ENCODE measurements at regions of chr6 and their contacts with region 1.

Region 1: DNA sequence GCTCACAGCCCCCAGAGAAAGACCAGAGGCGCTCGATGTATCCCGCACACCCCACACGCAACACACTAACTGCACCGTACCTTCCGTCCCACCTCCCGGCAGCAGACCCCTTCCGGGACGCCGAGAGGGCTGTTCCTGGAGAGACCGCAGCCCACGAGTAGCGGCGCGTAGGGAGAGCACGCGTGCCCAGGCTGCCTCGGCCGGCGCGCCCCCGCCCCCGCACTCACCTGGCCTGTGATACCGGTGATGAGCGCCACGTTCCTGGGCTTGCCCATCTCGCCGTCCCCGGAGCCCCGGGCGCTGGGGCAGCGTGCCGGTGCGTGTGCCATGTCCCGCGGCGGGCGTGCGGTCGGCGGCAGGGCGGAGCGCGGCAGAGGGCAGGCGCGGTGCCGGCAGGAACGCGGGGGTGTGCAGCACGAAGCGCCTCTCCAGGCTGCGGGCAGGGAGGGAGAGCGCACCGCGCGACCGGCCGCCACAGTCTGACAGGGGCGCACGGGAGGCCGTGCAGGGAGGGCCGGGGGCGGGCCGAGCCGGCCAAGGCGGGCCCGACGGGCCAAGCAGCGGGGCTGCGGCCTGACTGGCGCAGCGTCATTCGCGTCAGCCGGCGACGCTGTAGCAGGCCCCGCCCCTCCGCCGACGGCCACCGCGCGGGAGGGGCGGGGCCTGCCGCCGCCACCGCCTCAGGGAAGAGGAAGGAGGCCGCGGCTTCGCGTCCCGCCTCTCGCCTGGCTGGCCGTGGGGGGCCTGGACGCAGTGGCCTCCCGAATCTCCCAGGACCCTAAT is at the start of gene GMDS:
- DNase-seq: peak; percentile 86
- H3K4me3 Mint-ChIP-seq: peak within 1 kb of the TSS; percentile 91
- H3K27ac Mint-ChIP-seq: peak within 1 kb of the TSS; percentile 92
- H3K4me1 Mint-ChIP-seq: peaks cover 58% of the 10 kb centered on the region
- H3K27me3 Mint-ChIP-seq: no peaks in the 10 kb centered on the region
- total RNA-seq, gene GMDS: 34.7 to 36.4 TPM

Region 2: GRCh38 chr6:2127484-2127911 is 117.8 kb before region 1 on chr6:
- CTCF ChIA-PET with region 1: no interaction called
- POLR2A ChIA-PET with region 1: no interaction called
- intact Hi-C with region 1: loop called (anchors 5 kb)
- DNase-seq: peak; percentile 73
- H3K4me3 Mint-ChIP-seq: no peak overlapping the region
- H3K27ac Mint-ChIP-seq: peak overlapping the region; percentile 33
- H3K4me1 Mint-ChIP-seq: peaks cover 33% of the 10 kb centered on the region
- H3K27me3 Mint-ChIP-seq: no peaks in the 10 kb centered on the region

Region 3: DNA sequence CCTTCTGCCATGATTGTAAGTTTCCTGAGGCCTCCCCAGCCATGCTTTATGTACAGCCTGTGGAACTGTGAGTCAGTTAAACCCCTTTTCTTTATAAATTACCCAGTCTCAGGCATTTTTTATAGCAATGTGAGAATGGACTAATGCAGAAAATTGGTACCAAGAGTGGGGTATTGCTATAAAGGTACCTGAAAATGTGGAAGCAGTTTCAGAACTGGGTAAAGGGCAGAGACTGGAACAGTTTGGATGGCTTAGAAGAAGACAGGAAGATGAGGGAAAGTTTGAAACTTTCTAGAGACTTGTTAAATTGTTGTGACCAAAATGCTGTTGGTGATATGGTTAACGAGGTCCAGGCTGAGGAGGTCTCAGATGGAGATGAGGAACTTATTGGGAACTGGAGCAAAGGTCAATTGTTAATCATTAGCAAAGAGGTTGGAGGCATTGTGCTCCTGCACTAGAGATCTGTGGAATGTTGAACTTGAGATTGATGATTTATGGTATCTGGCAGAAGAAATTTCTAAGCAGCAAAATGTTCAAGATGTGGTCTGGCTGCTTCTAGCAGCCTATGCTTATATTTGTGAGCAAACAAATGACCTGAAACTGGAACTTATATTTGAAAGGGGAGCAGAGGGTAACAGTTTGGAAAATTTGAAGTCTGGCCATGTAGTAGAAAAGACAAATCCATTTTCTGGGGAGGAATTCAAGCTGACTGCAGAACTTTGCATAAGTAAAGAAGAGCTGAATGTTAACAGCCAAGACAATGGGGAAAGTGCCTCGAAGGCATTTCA is 79.1 kb after region 1 on chr6:
- CTCF ChIA-PET with region 1: no interaction called
- POLR2A ChIA-PET with region 1: no interaction called
- intact Hi-C with region 1: no loop called
- DNase-seq: no peak
- H3K4me3 Mint-ChIP-seq: no peak overlapping the region
- H3K27ac Mint-ChIP-seq: no peak overlapping the region
- H3K4me1 Mint-ChIP-seq: no peaks in the 10 kb centered on the region
- H3K27me3 Mint-ChIP-seq: no peaks in the 10 kb centered on the region

Region 4: GRCh38 chr6:2363211-2363610 is 117.9 kb after region 1 on chr6:
- CTCF ChIA-PET with region 1: no interaction called
- POLR2A ChIA-PET with region 1: no interaction called
- intact Hi-C with region 1: no loop called
- DNase-seq: no peak
- H3K4me3 Mint-ChIP-seq: no peak overlapping the region
- H3K27ac Mint-ChIP-seq: no peak overlapping the region
- H3K4me1 Mint-ChIP-seq: no peaks in the 10 kb centered on the region
- H3K27me3 Mint-ChIP-seq: no peaks in the 10 kb centered on the region

Region 5: DNA sequence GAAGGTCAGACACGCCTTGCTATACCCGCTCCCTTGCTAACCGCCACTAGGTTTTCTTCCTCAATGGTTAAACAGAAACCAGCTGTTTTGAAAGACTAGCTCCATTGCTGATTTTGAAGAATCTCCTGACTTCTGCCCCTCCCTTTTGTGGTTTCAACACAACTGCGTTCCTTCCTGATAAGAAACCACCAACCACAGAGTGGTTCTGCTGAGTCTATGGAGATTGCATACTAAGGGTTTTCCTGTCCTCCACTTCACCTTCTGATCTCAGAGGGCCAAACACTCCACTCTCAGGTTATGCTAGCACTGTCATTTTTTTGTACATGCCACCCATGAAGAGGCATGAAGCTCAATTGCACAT is 297.6 kb after region 1 on chr6:
- CTCF ChIA-PET with region 1: no interaction called
- POLR2A ChIA-PET with region 1: no interaction called
- intact Hi-C with region 1: loop called (anchors 10 kb)
- DNase-seq: peak; percentile 54
- H3K4me3 Mint-ChIP-seq: peak overlapping the region; percentile 4
- H3K27ac Mint-ChIP-seq: no peak overlapping the region
- H3K4me1 Mint-ChIP-seq: peaks cover 24% of the 10 kb centered on the region
- H3K27me3 Mint-ChIP-seq: peaks cover 68% of the 10 kb centered on the region

Region 6: GRCh38 chr6:3068329-3069214 is 823.3 kb after region 1 on chr6 and contains the start of gene RIPK1:
- CTCF ChIA-PET with region 1: no interaction called
- POLR2A ChIA-PET with region 1: no interaction called
- intact Hi-C with region 1: loop called (anchors 5 kb)
- DNase-seq: peak; percentile 96
- H3K4me3 Mint-ChIP-seq: peak within 1 kb of the TSS; percentile 96
- H3K27ac Mint-ChIP-seq: peak within 1 kb of the TSS; percentile 98
- H3K4me1 Mint-ChIP-seq: peaks cover 62% of the 10 kb centered on the region
- H3K27me3 Mint-ChIP-seq: no peaks in the 10 kb centered on the region
- total RNA-seq, gene RIPK1: 18.5 to 18.6 TPM